Activated CD4-positive, alpha-beta memory T cell treated with anti-CD3 and anti-CD28 coated beads for 36 hours (primary cell): ENCODE measurements at regions of chr16 and their contacts with region 1.

Region 1: GRCh38 chr16:70438969-70439862 is at the start of gene ST3GAL2:
- DNase-seq: peak; percentile 96
- H3K4me3 Mint-ChIP-seq: peak within 1 kb of the TSS; percentile 94
- H3K27ac Mint-ChIP-seq: peak within 1 kb of the TSS; percentile 76
- H3K4me1 Mint-ChIP-seq: peaks cover 31% of the 10 kb centered on the region
- H3K27me3 Mint-ChIP-seq: no peaks in the 10 kb centered on the region
- total RNA-seq, gene ST3GAL2: 16.7 to 17.3 TPM

Region 2: DNA sequence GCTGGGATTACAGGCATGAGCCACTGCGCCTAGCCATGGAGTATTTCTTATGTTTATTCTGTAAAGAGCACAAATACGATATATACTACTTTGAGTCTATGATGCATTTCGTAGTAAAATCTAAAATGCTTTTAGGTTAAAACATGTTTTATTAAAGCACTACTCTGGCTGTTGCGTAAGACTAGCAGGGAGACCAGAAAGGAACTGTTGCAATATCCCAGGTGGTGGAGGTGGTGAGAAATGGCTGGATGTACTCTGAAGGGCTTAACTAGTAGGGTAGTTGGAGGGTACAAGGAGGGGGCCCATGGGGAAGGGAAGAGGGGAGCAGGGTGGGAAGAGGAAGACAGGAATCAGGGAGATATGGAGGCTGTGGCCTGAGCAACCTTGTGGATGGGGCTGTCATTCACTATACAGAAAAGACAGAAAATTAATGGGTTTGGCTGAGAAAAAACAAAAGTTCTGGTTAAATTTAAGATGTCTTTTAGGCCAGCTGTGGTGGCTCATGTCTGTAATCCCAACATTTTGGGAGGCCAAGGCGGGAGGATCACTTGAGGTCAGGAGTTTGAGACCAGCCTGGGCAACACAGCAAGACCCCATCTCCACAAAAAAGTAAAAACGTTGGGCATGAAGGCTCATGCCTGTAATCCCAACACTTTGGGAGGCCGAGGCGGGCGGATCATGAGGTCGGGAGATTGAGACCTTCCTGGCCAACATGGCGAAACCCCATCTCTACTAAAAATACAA is 36.1 kb before region 1 on chr16:
- CTCF ChIA-PET with region 1: no interaction called
- POLR2A ChIA-PET with region 1: interaction called, 3 read pairs
- intact Hi-C with region 1: loop called (anchors 2 kb)
- DNase-seq: no peak
- H3K4me3 Mint-ChIP-seq: no peak overlapping the region
- H3K27ac Mint-ChIP-seq: peak overlapping the region; percentile 2
- H3K4me1 Mint-ChIP-seq: peaks cover 39% of the 10 kb centered on the region
- H3K27me3 Mint-ChIP-seq: no peaks in the 10 kb centered on the region

Region 3: DNA sequence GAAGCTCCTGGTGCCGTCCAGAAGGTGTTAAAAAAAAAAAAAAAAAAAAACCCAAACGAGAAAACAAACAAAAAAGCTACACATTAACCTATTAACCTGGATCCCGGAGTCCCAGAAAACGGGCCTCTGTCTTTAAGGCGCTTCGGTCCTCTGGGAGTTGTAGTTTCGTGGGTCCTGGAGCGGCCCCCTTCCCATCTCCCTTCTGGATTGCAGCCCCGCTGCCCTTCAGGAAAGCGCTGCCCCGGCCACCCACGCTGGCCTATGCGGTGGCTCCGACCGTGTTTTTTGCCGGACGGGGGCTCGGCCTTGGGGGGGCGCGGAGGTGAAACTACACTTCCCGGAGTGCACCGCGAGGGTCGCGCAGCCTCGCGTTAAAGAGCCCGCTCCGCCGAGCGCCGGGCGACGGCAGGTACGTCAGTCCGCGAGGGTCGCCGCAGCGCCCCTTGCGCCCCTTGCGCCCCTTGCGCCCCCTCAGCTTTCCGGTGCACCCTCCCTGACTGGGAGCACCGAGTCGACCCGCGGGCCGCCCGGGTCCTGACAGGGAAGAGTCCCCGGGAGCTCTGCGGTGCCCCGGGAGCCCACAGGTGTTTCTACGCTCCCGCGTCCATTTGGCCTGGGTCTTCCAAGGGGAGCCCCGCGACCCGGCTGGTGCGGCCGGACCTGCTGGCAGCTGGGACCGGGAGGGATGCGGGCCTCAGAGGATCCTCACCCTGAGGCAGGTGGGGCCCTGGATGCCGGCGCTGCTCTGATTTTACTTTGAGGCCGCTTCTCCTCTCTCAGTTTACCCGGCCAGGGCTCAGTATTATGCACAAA is 15.2 kb after region 1 on chr16 and contains the start of gene FCSK:
- CTCF ChIA-PET with region 1: interaction called, 7 read pairs
- POLR2A ChIA-PET with region 1: interaction called, 6 read pairs
- intact Hi-C with region 1: loop called (anchors 1 kb)
- DNase-seq: peak; percentile 69
- H3K4me3 Mint-ChIP-seq: peak within 1 kb of the TSS; percentile 85
- H3K27ac Mint-ChIP-seq: peak within 1 kb of the TSS; percentile 67
- H3K4me1 Mint-ChIP-seq: peaks cover 12% of the 10 kb centered on the region
- H3K27me3 Mint-ChIP-seq: no peaks in the 10 kb centered on the region
- total RNA-seq, gene FCSK: 13.1 to 14.0 TPM

Region 4: DNA sequence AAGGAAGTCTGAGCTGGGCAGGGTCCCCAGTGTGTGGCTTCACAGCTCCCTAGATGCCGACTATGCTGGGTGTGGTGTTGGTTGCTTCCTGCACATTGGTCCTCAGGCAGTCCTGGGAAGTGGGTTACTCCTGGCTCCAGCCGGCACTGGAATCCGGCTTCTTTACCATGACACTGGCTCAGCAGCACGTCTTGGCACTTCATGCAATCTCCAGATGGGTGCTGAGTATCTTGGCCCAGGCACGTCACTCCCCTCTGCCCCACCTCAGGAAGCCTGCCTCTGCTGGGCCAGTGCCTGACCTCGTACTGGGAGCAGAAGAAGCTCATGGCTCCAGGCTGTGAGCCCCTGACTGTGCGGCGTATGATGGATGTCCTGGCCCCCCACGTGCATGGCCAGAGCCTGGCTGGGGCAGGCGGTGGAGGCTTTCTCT is 39.7 kb after region 1 on chr16:
- CTCF ChIA-PET with region 1: interaction called, 3 read pairs
- POLR2A ChIA-PET with region 1: interaction called, 4 read pairs
- intact Hi-C with region 1: loop called (anchors 2 kb)
- DNase-seq: no peak
- H3K4me3 Mint-ChIP-seq: no peak overlapping the region
- H3K27ac Mint-ChIP-seq: peak overlapping the region; percentile 28
- H3K4me1 Mint-ChIP-seq: peaks cover 25% of the 10 kb centered on the region
- H3K27me3 Mint-ChIP-seq: no peaks in the 10 kb centered on the region